Gastrocnemius medialis (tissue), 4 donors: ENCODE measurements at regions of chr3 and their contacts with region 1.

Region 1: DNA sequence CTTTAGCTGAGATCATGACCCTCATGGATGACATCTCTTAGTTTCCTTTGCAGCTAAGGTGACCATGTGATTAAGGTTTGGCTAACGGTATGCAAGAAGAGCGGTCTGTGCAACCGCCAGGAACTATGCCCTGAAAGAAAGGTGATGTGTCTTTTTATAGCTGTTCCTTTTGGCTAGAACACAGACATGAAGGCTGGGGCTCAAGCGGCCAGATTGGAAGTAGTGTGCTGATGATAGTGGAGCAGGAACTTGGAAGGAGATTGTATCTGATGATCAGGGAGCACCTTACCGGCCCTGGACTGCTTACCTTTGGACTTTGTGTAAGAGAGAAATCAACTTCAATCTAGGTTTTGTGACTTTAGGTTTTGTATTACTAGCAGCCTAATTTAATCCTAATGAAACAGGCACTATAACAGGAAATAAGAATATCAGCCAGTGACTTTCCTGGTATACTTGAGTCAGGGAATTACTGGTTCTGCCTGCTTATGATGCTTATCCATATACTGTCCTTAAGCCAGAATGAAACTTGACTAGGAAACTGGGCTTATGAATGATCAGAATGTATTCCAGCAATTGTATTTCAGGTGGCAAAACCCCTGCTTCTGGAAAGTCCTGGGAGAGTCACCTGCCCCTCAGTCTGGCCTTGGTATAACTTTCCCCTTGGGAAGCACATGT is 164.3 kb upstream of the LRIG1 start:
- DNase-seq: peak; percentile 53 to 76
- ATAC-seq: peak; percentile 98
- H3K4me3 ChIP-seq: no peak overlapping the region
- H3K27ac ChIP-seq: peak overlapping the region; percentile 66 to 82 (median 72)
- H3K4me1 ChIP-seq: peaks cover 11 to 13% of the 10 kb centered on the region in 2 donors
- H3K27me3 ChIP-seq: no peaks in the 10 kb centered on the region
- CTCF ChIP-seq: no peak
- POLR2A ChIP-seq: no peak

Region 2: DNA sequence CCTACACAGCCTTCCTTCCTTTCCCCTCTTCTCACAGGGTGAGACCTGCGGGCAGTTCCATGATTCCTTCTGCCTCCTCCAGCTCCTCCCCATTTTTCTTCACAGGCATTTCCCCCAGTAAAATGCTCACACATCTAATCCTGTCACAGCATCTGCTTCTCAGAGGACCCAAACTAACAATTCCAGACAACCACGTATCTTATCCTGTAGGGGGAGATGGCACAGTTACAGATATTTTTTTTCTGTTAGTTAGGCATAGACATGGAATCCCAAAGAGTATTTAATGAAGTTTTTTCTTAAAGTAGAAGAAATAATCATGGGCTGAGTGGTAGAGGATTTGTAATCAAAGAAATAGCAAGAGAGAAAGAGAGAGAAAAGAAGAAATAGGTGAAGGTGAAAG is 1604.3 kb before region 1 on chr3:
- in situ Hi-C with region 1: no loop called
- intact Hi-C with region 1: no loop called
- DNase-seq: no peak
- ATAC-seq: no peak
- H3K4me3 ChIP-seq: no peak overlapping the region
- H3K27ac ChIP-seq: no peak overlapping the region
- H3K4me1 ChIP-seq: no peaks in the 10 kb centered on the region
- H3K27me3 ChIP-seq: no peaks in the 10 kb centered on the region
- CTCF ChIP-seq: no peak
- POLR2A ChIP-seq: no peak

Region 3: DNA sequence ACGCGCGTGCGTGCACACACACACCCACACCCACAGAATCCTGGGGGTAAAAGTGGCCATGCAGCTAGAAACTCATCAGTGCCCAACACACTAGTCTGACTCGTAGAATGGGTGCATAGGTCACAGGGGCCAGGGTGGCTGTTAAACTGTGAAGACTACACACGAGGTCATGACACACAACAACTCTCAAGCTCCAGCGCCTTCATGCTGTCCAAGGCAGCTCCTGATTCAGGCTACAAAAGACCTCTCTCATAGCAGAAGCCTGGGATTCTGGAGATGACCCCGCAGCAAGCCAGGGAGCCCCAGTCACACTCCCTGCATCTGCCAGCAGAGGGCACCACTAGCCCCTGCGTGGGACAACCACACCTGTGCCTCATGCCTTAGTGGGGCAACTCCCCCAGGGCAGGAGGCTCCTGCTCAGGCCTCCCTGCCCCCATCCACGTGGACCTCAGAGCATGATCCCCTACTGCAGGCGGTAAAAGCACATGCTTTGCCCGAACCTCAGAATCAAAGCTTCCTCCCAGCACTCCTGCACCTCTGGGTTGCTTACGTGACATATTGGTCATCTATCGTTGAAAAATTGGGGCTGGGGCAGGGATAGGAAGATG is 257.4 kb before region 1 on chr3:
- in situ Hi-C with region 1: no loop called
- intact Hi-C with region 1: loop called (anchors 5 kb)
- DNase-seq: peak; percentile 57 to 84
- ATAC-seq: peak; percentile 32 to 61
- H3K4me3 ChIP-seq: no peak overlapping the region
- H3K27ac ChIP-seq: peak overlapping the region; percentile 77 to 92 (median 80)
- H3K4me1 ChIP-seq: peaks cover 60 to 68% of the 10 kb centered on the region in 2 donors
- H3K27me3 ChIP-seq: no peaks in the 10 kb centered on the region
- CTCF ChIP-seq: peak; percentile 91 to 98 (median 96)
- POLR2A ChIP-seq: no peak

Region 4: DNA sequence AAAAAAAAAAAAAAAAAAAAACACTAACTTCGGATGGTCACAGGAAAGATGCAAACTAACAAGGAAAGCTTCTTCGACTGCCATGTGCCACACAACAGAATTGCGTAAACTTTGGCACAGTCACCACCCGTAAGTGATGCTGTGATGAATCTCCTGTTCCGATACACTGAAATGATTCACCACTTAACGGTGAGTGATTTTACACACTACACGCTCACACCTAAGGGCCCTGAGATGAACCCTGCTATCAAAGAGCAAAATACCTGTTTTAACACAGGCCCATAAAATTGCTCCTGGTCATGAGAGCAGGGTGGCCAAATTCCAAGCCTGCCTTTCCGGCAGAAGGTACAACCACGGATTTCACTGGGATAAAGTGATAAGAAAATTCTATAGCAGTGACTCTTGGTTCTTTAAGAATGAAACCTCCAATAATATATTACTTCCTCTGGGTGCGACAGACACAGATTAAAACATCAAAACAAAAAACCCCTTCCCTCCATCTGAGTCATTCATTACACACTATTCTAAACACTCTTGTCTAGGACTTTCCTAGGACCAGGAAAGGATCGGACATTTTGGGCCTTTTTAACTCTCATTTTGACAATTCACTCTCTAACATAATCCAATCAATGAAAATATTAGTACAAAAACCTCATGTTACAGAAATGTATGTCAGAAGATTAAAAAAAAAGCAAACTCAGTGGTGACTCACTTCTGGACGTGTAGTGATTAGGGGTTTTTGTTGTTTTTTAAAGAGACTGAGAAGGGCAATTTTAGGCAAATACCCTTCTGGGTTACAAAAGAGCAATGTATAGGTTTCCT is 192.6 kb before region 1 on chr3:
- in situ Hi-C with region 1: no loop called
- intact Hi-C with region 1: no loop called
- DNase-seq: peak in 1 of 2 donors; percentile 51
- ATAC-seq: peak; percentile 87 to 92
- H3K4me3 ChIP-seq: peak overlapping the region in 1 of 4 donors; percentile 2
- H3K27ac ChIP-seq: no peak overlapping the region
- H3K4me1 ChIP-seq: peaks cover 59 to 60% of the 10 kb centered on the region in 2 donors
- H3K27me3 ChIP-seq: no peaks in the 10 kb centered on the region
- CTCF ChIP-seq: no peak
- POLR2A ChIP-seq: no peak

Region 5: GRCh38 chr3:66762916-66763710 is 98.0 kb after region 1 on chr3:
- in situ Hi-C with region 1: no loop called
- intact Hi-C with region 1: loop called (anchors 5 kb)
- DNase-seq: peak; percentile 56 to 66
- ATAC-seq: peak; percentile 89 to 94
- H3K4me3 ChIP-seq: no peak overlapping the region
- H3K27ac ChIP-seq: peak overlapping the region; percentile 33 to 87 (median 82)
- H3K4me1 ChIP-seq: peaks cover 29 to 33% of the 10 kb centered on the region in 2 donors
- H3K27me3 ChIP-seq: no peaks in the 10 kb centered on the region
- CTCF ChIP-seq: no peak
- POLR2A ChIP-seq: no peak